GM12878 (cell line): ENCODE measurements at regions of chr6 and their contacts with region 1.

Region 1: GRCh38 chr6:7107578-7108195 is at the start of gene RREB1:
- DNase-seq: no peak
- ATAC-seq: peak; percentile 76
- H3K4me3 ChIP-seq: peak within 1 kb of the TSS; percentile 97
- H3K27ac ChIP-seq: peak within 1 kb of the TSS; percentile 94
- H3K4me1 ChIP-seq: peaks cover 5% of the 10 kb centered on the region
- H3K27me3 ChIP-seq: no peaks in the 10 kb centered on the region
- CTCF ChIP-seq: no peak
- EP300 ChIP-seq: no peak
- POLR2A ChIP-seq: peak; percentile 33
- RAD21 ChIP-seq: peak; percentile 1; the same call in 1 of the 2 replicates
- polyA plus RNA-seq, gene RREB1: 1.9 to 2.1 TPM

Region 2: DNA sequence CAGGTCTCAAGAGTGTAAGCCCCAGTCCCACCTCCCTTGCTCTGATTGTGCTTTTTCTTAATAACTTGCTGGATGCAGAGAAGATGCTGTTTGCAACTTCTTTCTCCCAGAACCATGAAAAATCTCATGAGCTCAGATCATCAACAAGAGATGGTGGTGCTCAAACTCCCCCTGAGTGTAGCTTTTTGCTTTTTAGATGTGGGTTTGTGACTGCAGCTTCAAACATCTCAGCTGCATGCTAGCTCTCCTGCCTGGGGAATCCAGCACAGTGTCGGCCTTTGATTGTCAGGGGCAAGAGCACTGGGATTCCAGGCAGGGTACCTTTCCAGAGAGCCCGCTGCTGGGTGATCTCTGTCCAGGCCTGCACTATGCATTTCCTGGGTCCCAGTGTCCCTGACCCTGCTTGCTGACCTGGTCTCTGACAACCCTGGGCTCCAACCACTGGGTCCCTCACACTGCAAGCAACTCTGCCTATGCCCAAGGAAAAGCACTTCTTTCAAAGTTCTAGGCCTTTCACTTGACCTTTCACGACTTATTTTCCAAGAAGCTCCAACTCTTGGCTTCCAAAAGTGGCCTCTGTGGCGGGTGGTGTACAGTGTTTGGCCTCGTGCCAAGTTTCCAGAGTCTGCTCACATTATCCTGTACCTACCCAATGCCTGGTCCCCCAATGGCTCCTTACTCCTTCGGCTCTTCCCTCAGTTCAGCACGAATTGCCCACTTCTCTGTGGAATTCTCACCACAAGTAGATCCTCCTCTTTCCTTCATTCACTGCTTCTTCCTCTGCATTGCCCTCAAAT is 588.9 kb before region 1 on chr6:
- CTCF ChIA-PET with region 1: no interaction called
- POLR2A ChIA-PET with region 1: no interaction called
- RAD21 ChIA-PET with region 1: no interaction called
- SMC1A ChIA-PET with region 1: no interaction called
- in situ Hi-C with region 1: no loop called
- intact Hi-C with region 1: no loop called
- DNase-seq: no peak
- ATAC-seq: no peak
- H3K4me3 ChIP-seq: no peak overlapping the region
- H3K27ac ChIP-seq: no peak overlapping the region
- H3K4me1 ChIP-seq: peaks cover 26% of the 10 kb centered on the region
- H3K27me3 ChIP-seq: no peaks in the 10 kb centered on the region
- CTCF ChIP-seq: no peak
- EP300 ChIP-seq: no peak
- POLR2A ChIP-seq: no peak
- RAD21 ChIP-seq: no peak

Region 3: DNA sequence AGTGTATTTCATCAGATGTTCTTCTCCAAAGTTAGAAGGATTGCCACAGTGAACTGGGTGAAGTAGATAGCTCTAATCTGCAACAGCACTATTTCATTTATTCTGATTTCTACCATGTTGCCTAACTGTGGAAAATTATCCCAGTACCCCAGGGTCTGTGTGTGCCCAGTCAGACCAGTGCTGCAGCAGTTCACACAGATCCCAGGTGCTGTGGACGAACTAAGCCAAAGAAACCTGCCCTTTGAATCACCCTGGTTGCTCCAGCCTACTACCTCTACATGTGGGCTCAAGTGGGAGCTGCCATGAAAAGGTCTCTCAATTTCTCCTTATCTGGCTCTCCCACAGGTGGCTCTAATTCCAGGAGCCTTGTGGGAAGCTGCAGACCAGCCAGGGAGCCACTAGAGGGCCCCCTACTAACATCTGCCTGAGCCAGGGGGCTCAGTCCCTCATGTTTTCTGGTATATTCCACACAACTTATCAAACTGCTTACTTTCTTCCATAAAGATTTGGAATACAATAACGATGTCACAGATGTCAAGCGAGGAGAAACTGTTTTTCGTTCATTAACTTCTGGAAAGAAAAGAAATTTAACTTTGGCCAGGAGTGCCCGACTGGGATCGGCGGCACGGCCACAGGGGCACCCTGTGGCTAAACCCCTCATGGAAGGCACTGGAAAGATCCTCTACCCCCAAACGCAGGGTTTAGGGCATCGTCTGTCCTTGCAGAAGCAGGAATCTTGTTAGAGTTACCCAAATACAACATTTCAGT is 550.8 kb before region 1 on chr6:
- CTCF ChIA-PET with region 1: no interaction called
- POLR2A ChIA-PET with region 1: no interaction called
- RAD21 ChIA-PET with region 1: no interaction called
- SMC1A ChIA-PET with region 1: no interaction called
- in situ Hi-C with region 1: no loop called
- intact Hi-C with region 1: no loop called
- DNase-seq: no peak
- ATAC-seq: peak; percentile 91
- H3K4me3 ChIP-seq: no peak overlapping the region
- H3K27ac ChIP-seq: no peak overlapping the region
- H3K4me1 ChIP-seq: no peaks in the 10 kb centered on the region; the same call in 1 of the 2 replicates
- H3K27me3 ChIP-seq: no peaks in the 10 kb centered on the region
- CTCF ChIP-seq: peak; percentile 82 to 92 (median 91)
- EP300 ChIP-seq: no peak
- POLR2A ChIP-seq: no peak
- RAD21 ChIP-seq: peak; percentile 84

Region 4: DNA sequence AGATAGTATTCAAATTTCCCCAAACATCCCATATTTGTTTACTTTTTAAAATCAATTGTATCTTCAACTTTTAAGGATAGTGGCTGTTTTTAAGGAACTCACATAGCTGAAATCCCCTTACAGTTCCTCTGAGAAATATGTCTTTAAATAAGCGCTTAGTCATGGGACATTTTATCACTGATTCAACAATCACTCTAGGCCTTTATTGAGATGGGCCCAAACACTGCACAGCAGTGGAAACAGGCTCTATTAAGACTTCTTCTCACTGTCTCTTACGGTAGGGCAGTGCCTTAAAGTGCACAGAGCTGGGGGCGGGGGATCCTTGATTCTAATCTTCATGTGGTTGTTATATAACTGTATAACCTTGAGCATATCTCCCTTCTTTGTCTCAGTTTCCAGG is 59.7 kb before region 1 on chr6:
- CTCF ChIA-PET with region 1: no interaction called
- POLR2A ChIA-PET with region 1: no interaction called
- RAD21 ChIA-PET with region 1: no interaction called
- SMC1A ChIA-PET with region 1: no interaction called
- in situ Hi-C with region 1: no loop called
- intact Hi-C with region 1: no loop called
- DNase-seq: no peak
- ATAC-seq: no peak
- H3K4me3 ChIP-seq: no peak overlapping the region
- H3K27ac ChIP-seq: no peak overlapping the region
- H3K4me1 ChIP-seq: peaks cover 5% of the 10 kb centered on the region
- H3K27me3 ChIP-seq: peaks cover 0 to 5% of the 10 kb centered on the region in 2 experiments; a peak in 3 of 4 replicates
- CTCF ChIP-seq: no peak
- EP300 ChIP-seq: no peak
- POLR2A ChIP-seq: no peak
- RAD21 ChIP-seq: no peak

Region 5: DNA sequence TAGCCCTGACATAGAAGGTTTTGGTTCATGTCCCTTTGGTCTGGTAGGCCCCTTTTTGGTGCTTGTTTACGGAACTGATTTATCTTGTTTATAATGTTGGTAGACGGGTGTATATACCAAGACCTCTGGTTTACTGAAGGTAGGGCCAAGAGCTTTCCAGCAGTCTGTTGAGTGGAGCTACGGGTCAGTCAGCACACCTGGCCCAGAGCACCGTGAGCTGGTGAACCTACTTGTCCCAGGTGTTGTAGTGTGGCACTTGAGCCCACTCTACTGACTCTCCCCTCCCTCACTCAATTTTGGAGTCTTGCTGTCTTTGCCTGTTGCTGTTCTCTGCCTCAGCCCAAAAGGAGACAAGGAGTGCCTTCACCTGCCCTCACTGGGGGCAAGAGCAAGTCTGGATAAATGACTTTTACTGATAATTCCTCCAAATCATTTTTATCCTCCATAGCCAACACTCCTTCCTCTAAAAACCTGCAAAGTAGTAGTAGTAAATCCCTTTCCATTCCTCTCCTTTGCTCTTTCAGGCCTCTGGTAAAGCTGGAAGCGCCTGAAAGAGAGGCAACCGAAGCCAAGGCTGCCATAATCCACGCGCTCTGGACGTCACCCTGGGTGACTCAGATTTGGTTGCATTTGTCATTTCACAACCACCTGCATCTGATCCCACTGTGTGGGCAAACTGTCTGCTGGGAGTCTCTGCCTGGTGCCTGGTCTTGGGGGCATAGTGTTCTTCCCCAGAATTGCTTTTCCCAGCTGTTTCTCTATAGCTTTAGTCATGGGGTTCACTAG is 22.3 kb after region 1 on chr6:
- CTCF ChIA-PET with region 1: interaction called, 5 read pairs
- POLR2A ChIA-PET with region 1: interaction called, 6 read pairs
- RAD21 ChIA-PET with region 1: interaction called, 62 read pairs
- SMC1A ChIA-PET with region 1: interaction called, 94 read pairs
- in situ Hi-C with region 1: no loop called
- intact Hi-C with region 1: loop called (anchors 2 kb)
- DNase-seq: no peak
- ATAC-seq: peak; percentile 31
- H3K4me3 ChIP-seq: no peak overlapping the region
- H3K27ac ChIP-seq: peak overlapping the region; percentile 43; the same call in 1 of the 2 replicates
- H3K4me1 ChIP-seq: peaks cover 57% of the 10 kb centered on the region
- H3K27me3 ChIP-seq: no peaks in the 10 kb centered on the region
- CTCF ChIP-seq: no peak
- EP300 ChIP-seq: no peak
- POLR2A ChIP-seq: no peak
- RAD21 ChIP-seq: no peak

Region 6: DNA sequence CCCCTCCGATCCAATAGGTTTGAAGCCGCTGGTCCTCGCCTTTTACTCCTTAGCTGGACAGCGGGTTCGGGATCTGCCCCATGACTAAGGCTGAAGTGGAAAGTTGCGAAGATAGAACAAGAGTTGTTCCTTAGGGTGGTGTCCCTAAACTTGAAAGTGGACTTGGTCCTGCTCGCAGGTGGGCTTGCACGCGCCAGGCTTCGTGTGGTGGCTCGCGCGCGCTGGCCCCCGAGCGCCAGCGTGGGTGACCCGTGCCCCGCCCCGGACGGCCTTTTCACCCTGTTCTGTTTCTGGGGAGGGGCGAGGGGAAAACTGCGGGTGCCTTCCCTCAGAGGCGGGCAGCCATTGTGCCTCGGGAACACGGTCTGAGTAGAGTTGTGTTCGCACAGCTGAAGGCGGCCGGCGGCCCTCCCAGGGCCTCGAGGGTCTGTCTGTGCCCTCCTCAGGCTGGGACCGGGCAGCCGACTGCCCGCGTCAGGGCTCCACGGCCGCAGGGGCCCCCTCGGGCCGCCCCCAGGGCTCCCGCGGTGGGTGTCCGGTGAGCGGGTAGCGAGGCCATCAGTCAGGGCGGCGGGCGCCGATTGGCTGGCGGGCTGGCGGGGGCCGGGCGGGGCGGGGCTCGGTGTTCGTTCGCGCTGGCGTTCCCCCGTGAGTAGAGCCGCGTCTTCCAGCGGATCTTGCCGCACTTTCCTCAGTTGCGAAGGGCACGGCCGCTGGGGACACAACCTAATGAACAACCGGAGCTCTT is 33.1 kb after region 1 on chr6:
- CTCF ChIA-PET with region 1: interaction called, 18 read pairs
- POLR2A ChIA-PET with region 1: interaction called, 16 read pairs
- RAD21 ChIA-PET with region 1: interaction called, 62 read pairs
- SMC1A ChIA-PET with region 1: interaction called, 94 read pairs
- in situ Hi-C with region 1: no loop called
- intact Hi-C with region 1: no loop called
- DNase-seq: no peak
- ATAC-seq: peak; percentile 74
- H3K4me3 ChIP-seq: peak overlapping the region; percentile 81
- H3K27ac ChIP-seq: peak overlapping the region; percentile 87
- H3K4me1 ChIP-seq: peaks cover 85% of the 10 kb centered on the region
- H3K27me3 ChIP-seq: no peaks in the 10 kb centered on the region
- CTCF ChIP-seq: no peak
- EP300 ChIP-seq: no peak
- POLR2A ChIP-seq: peak; percentile 82
- RAD21 ChIP-seq: no peak